HEK293 (cell line): ENCODE measurements at regions of chr11 and their contacts with region 1.

Region 1: GRCh38 chr11:64204464-64204989 is 2.0 kb upstream of the FERMT3 start:
- H3K4me3 ChIP-seq: no peak overlapping the region
- H3K27ac ChIP-seq: peak overlapping the region; percentile 55
- H3K4me1 ChIP-seq: 0 out of 2 replicates have a peak, but pooled peaks cover 8% of the 10 kb centered on the region
- CTCF ChIP-seq: peak; percentile 80

Region 2: DNA sequence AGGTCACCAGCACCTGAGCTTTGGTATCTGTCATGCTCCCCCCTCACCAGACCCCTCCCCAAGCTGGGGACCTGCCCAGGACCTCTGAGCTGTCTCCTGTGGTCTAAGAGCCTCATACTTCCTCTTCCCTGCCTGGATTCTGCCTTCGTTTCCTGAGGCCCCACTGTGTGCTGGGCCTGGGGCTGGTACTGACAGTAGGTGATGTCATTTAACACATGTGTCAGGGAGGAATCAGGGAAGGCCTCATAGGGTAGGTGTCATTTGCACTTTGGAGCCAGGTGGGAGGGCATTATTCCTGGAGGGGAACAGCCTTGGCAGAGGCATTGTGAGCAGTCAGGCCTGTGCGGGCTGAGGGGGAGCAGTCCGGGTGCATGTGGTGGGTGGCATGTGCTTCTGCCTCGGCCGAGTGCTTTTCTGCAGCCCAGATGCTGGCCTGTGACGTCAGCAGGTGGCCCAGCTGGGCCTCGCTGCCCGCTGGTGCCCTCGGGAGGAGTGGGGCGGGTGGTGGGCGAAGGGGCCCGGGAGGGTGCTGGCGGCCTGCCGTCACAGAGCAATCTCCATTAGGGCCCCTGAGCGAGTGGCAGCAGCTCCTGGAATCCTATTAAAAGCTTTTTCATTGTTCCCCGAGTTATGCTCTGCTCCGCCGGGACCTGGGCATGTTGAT is 159.7 kb before region 1 on chr11:
- CTCF ChIA-PET with region 1: no interaction called
- POLR2A ChIA-PET with region 1: no interaction called
- H3K4me3 ChIP-seq: no peak overlapping the region
- H3K27ac ChIP-seq: no peak overlapping the region
- H3K4me1 ChIP-seq: no peaks in the 10 kb centered on the region
- CTCF ChIP-seq: no peak

Region 3: DNA sequence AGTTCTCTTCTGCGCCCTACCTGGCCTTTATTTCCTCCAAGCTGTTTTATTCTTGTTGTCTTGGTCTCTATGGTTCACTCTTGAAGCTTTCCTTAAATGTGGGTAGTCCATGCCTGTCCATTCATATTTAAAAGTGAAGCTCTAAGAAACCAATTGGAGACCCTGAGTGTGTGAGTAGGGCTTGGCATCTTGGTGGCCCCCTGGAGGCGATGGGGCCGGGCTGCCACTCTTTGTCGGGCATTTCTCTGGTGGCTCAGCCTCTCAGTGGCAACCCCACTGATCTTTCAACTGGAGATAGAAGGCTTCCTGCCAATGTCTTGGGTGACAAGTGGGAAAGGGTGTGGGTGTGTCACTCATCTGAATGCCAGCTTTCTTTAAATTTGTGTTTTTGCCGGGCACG is 12.4 kb after region 1 on chr11:
- CTCF ChIA-PET with region 1: interaction called, 37 read pairs
- POLR2A ChIA-PET with region 1: interaction called, 3 read pairs
- H3K4me3 ChIP-seq: no peak overlapping the region
- H3K27ac ChIP-seq: no peak overlapping the region
- H3K4me1 ChIP-seq: no peaks in the 10 kb centered on the region
- CTCF ChIP-seq: no peak

Region 4: DNA sequence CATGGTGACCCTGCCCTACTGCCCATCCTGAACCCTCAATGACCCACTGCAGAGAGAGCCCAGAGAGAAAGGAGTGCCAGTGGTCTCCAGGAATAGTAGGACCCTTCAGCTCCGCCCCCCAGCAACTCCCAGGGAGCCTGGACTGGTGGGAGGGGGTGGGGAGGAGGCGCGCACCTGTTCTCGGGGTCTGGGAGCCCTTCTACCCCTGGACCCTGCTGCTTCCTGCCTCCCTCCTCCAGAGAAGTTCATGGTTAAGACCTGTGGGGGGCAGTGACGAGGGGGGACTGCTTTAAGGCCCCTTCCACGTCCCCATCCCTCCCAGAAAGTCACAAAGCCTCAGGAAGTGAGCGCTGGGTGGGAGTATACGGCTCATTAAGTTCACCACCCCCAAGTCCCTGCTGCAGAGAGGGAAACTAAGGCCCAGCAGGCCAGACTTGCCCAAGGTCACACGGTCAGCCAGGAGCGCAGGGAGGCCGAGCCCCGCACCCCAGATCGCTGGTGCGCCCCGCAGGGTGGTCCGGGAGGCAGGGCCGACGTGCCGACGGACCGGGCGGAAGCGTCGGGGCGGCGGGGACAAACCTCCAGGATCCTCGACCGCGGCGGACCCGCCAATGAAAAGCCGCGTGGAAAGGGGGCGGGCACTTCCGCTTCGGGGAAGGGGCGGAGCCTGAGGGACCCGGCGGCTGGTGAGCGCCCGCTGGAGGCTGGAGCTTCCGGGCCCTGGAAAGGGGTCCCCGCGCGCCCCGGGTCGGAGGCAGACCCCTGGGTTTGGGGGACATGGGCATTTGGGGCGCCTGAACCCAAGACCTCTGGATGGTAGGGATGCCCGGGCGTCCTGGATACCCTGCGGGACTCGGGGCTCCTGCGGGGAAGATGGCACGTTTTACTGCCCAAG is 21.3 kb after region 1 on chr11 and contains the starts of genes NUDT22 and TRPT1:
- CTCF ChIA-PET with region 1: interaction called, 10 read pairs
- POLR2A ChIA-PET with region 1: interaction called, 6 read pairs
- H3K4me3 ChIP-seq: peak within 1 kb of the TSS; percentile 77
- H3K27ac ChIP-seq: peak within 1 kb of the TSS; percentile 52; the same call in 1 of the 2 replicates
- H3K4me1 ChIP-seq: peaks cover 3% of the 10 kb centered on the region; the same call in 1 of the 2 replicates
- CTCF ChIP-seq: no peak; the same call in 1 of the 2 replicates

Region 5: DNA sequence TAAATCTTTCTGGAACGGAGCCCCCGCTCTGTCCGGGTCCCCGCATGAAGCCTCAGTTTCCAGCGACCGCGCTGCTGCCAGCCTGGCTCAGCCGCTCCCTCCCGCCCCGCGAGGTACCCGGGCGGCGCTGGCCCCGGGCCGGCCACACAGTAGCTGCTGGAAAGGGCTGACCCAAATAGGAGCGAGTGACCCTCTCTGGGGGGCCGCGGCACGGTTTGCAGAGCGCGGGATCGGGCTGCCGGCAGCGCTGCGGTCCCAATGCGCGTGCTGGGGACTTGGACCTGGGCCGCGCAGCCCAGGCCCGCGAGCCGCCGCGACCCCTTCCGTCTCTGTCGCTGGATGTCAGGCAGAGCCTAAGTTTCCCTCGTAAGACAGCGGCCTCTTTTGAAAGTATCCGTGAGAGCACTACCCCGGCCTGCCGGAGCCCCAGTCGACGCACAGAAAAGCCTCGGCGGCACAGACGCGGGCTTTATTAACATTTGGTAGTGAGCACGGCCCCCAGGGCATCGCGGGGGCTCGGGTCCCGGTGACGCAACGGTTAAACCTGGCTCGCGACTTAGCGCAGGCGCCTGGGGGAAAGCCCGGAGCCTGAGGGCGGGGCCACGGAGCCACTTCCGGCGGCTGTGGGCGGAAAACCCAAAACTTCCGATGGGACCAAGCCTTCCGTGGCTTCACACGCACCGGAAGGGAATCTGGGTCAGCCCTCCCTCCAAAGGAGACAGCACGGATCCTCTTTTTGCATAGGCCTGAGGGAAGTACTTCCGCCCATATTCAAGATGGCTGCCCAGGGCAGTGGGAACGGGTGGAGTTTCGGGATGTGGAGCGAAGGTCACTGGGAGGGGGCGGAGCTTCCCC is 65.1 kb after region 1 on chr11:
- CTCF ChIA-PET with region 1: interaction called, 13 read pairs
- POLR2A ChIA-PET with region 1: interaction called, 5 read pairs
- H3K4me3 ChIP-seq: peak overlapping the region; percentile 70
- H3K27ac ChIP-seq: peak overlapping the region; percentile 83
- H3K4me1 ChIP-seq: 0 out of 2 replicates have a peak, but pooled peaks cover 2% of the 10 kb centered on the region
- CTCF ChIP-seq: 0 out of 2 replicates have a peak, but pooled peaks have one; percentile 25

Region 6: GRCh38 chr11:64489831-64490441 is 285.4 kb after region 1 on chr11:
- CTCF ChIA-PET with region 1: no interaction called
- POLR2A ChIA-PET with region 1: no interaction called
- H3K4me3 ChIP-seq: no peak overlapping the region
- H3K27ac ChIP-seq: no peak overlapping the region
- H3K4me1 ChIP-seq: no peaks in the 10 kb centered on the region
- CTCF ChIP-seq: peak; percentile 56